ENCODE measurements at regions of chr6 and their contacts with region 1.

Region 1: DNA sequence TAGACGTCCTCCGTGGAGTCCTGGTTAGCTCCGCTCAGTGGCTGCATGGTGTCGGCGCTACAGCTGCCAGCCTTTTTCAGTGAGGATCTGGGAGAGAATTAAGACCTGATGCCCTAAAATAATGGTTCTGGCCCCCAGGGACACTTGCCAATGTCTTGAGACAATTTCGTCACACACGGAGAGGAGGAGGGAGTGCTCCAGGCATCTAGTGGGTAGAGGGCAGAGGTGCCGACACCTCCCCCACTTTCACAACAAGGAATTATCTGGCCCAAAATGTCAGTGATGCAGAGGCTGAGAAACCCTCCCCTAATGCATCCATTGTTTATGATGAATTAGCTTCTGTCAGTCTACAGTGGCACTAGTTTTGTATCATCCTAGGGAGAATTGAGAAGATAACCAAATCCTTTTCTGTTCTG is 24.4 kb downstream of the TMEM181 start:
- DNase-seq: no peak
- ATAC-seq: no peak
- H3K4me3 ChIP-seq: no peak overlapping the region
- H3K4me3 Mint-ChIP-seq: no peak overlapping the region
- H3K27ac ChIP-seq: no peak overlapping the region
- H3K27ac Mint-ChIP-seq: no peak overlapping the region
- H3K4me1 ChIP-seq: no peaks in the 10 kb centered on the region
- H3K4me1 Mint-ChIP-seq: peaks cover 0 to 4% (median 2%) of the 10 kb centered on the region in 3 donors
- H3K27me3 ChIP-seq: no peaks in the 10 kb centered on the region
- H3K27me3 Mint-ChIP-seq: no peaks in the 10 kb centered on the region

Region 2: GRCh38 chr6:158559895-158560835 is 24.1 kb before region 1 on chr6 and contains the start of gene TMEM181:
- CTCF ChIA-PET with region 1: no interaction called
- POLR2A ChIA-PET with region 1: no interaction called
- DNase-seq: peak; percentile 75 to 95 (median 85)
- ATAC-seq: peak; percentile 91 to 94 (median 92)
- H3K4me3 ChIP-seq: peak within 1 kb of the TSS; percentile 71 to 72
- H3K4me3 Mint-ChIP-seq: peak within 1 kb of the TSS; percentile 94 to 96 (median 95)
- H3K27ac ChIP-seq: peak within 1 kb of the TSS; percentile 76
- H3K27ac Mint-ChIP-seq: peak within 1 kb of the TSS; percentile 94
- H3K4me1 ChIP-seq: peaks cover 5 to 53% of the 10 kb centered on the region in 2 experiments
- H3K4me1 Mint-ChIP-seq: peaks cover 39 to 50% (median 47%) of the 10 kb centered on the region in 3 donors
- H3K27me3 ChIP-seq: no peaks in the 10 kb centered on the region
- H3K27me3 Mint-ChIP-seq: no peaks in the 10 kb centered on the region
- total RNA-seq, gene TMEM181: 15.9 to 21.5 (median 19.9) TPM

Region 3: GRCh38 chr6:158611541-158612370 is 27.5 kb after region 1 on chr6:
- CTCF ChIA-PET with region 1: no interaction called
- POLR2A ChIA-PET with region 1: interaction called in 1 of 2 experiments, 12 read pairs
- DNase-seq: no peak
- ATAC-seq: no peak
- H3K4me3 ChIP-seq: no peak overlapping the region
- H3K4me3 Mint-ChIP-seq: no peak overlapping the region
- H3K27ac ChIP-seq: no peak overlapping the region
- H3K27ac Mint-ChIP-seq: peak overlapping the region in 1 of 2 donors; percentile 59
- H3K4me1 ChIP-seq: no peaks in the 10 kb centered on the region
- H3K4me1 Mint-ChIP-seq: peaks cover 0 to 5% (median 2%) of the 10 kb centered on the region in 3 donors
- H3K27me3 ChIP-seq: no peaks in the 10 kb centered on the region
- H3K27me3 Mint-ChIP-seq: no peaks in the 10 kb centered on the region

Measured in T-cell (primary cell).